ENCODE measurements at regions of chr2 and their contacts with region 1.

Region 1: GRCh38 chr2:122506620-122507019 is 751.2 kb downstream of the TSN start:
- DNase-seq: no peak
- ATAC-seq: no peak
- H3K4me3 ChIP-seq: no peak overlapping the region
- H3K27ac ChIP-seq: no peak overlapping the region
- H3K4me1 ChIP-seq: no peaks in the 10 kb centered on the region
- H3K27me3 ChIP-seq: no peaks in the 10 kb centered on the region
- CTCF ChIP-seq: no peak

Region 2: GRCh38 chr2:122469147-122469546 is 37.5 kb before region 1 on chr2:
- CTCF ChIA-PET with region 1: no interaction called
- POLR2A ChIA-PET with region 1: no interaction called
- intact Hi-C with region 1: loop called (anchors 5 kb)
- DNase-seq: peak; percentile 52
- ATAC-seq: no peak; the same call in 1 of the 2 replicates
- H3K4me3 ChIP-seq: no peak overlapping the region
- H3K27ac ChIP-seq: no peak overlapping the region
- H3K4me1 ChIP-seq: peaks cover 11% of the 10 kb centered on the region
- H3K27me3 ChIP-seq: no peaks in the 10 kb centered on the region
- CTCF ChIP-seq: no peak